GM23248 (cell line): ENCODE measurements at regions of chr7 and their contacts with region 1.

Region 1: GRCh38 chr7:47818796-47819606 is 129.3 kb downstream of the PKD1L1 start:
- DNase-seq: peak; percentile 83
- H3K4me3 ChIP-seq: no peak overlapping the region
- H3K27ac ChIP-seq: no peak overlapping the region
- H3K4me1 ChIP-seq: peaks cover 12% of the 10 kb centered on the region; the same call in 1 of the 2 replicates
- H3K27me3 ChIP-seq: no peaks in the 10 kb centered on the region

Region 2: DNA sequence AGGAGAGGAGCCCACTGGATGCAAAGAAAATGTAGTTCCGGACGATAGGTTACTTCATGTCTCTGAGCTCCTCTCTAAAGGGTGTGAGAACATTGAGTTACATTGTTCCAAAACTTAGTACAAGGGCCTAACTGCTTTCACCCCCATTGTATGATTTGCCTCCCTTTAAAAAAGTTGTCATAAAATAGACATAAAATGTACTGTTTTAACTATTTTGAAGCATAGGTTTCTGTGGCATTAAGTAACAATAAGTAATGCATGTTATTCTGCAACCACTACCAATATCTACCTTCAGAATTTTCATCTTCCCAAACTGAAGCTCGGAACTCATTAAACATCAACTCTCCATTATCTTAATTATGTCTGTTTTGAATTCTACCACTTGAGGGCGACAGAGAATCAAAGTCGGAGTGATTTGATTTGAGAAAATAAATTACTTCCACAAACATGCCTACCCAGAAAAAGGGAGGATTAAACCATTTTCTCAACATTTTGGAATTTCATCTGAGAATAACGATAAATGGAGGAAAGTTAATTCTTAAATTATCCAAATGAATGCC is 1928.0 kb before region 1 on chr7:
- in situ Hi-C with region 1: loop called (anchors 25 kb)
- DNase-seq: peak; percentile 63
- H3K4me3 ChIP-seq: no peak overlapping the region
- H3K27ac ChIP-seq: no peak overlapping the region
- H3K4me1 ChIP-seq: 0 out of 2 replicates have a peak, but pooled peaks cover 2% of the 10 kb centered on the region
- H3K27me3 ChIP-seq: no peaks in the 10 kb centered on the region

Region 3: DNA sequence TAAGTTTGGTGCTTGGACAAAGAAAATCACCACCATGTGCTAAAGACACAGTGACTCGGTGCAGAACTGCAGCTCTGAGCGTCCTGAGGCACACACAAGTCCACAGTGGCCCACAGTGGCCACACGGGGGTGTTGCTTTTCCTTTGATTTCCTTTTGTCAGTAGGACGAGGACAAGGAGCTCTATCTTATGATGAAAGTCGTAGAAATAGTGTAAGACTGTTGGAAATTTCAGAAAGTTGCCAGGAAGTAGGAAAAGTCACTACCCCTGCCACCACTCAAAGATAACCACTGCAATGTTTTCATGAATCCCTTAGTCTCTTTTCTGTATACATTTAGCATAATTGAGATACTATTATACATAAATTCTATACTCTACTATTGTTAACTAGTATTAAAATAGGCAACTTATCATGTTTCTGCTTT is 383.1 kb before region 1 on chr7:
- in situ Hi-C with region 1: loop called (anchors 10 kb)
- DNase-seq: peak; percentile 86
- H3K4me3 ChIP-seq: no peak overlapping the region
- H3K27ac ChIP-seq: no peak overlapping the region; the same call in 1 of the 2 replicates
- H3K4me1 ChIP-seq: peaks cover 4% of the 10 kb centered on the region
- H3K27me3 ChIP-seq: no peaks in the 10 kb centered on the region

Region 4: GRCh38 chr7:48118041-48118440 is 299.0 kb after region 1 on chr7:
- in situ Hi-C with region 1: no loop called
- DNase-seq: no peak
- H3K4me3 ChIP-seq: no peak overlapping the region
- H3K27ac ChIP-seq: no peak overlapping the region
- H3K4me1 ChIP-seq: peaks cover under 1% of the 10 kb centered on the region; the same call in 1 of the 2 replicates
- H3K27me3 ChIP-seq: no peaks in the 10 kb centered on the region